ENCODE measurements at regions of chr1 and their contacts with region 1.

Region 1: DNA sequence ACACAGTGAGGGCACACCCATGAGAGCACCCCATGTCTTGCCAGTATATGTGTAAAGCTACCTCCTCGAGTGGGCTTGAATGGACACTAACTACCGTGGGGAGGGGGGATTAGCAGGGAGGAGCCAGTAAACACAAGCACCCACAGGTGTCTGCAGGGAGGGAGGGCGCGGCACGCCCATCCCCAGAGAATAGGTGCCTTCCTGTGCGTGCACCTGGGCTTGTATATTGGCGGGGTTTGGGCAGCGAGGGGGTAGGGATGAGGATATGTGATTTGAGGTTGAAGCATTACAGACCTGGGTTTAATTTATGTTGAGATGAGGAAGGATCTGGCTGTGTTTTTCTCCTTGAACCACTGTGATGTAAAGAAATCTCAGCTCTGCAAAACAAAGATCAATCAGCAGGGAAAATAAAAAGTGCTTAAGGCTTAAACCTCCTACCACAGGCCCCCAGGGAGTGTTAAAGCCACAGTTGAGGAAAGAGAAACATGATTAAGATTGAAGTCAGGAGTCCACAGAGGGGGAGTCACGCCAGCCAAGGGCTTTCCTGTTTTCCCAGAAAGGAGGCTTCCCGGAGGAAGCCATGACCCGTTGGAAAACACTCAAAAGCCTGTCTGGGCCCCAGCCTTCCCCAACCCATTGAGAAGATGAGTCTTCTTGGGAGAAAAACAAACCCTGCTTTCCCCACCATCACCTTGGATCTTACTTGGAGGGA is 80.0 kb downstream of the CAMK2N1 start:
- DNase-seq: peak; percentile 95
- H3K4me3 ChIP-seq: peak overlapping the region; percentile 67
- H3K27ac ChIP-seq: peak overlapping the region; percentile 99
- H3K4me1 ChIP-seq: peaks cover 87% of the 10 kb centered on the region
- CTCF ChIP-seq: no peak

Region 2: GRCh38 chr1:20383631-20384030 is 22.4 kb before region 1 on chr1:
- CTCF ChIA-PET with region 1: interaction called, 5 read pairs
- POLR2A ChIA-PET with region 1: interaction called, 43 read pairs
- intact Hi-C with region 1: loop called (anchors 1 kb)
- DNase-seq: peak; percentile 95
- H3K4me3 ChIP-seq: peak overlapping the region; percentile 42
- H3K27ac ChIP-seq: peak overlapping the region; percentile 90
- H3K4me1 ChIP-seq: peaks cover 94% of the 10 kb centered on the region
- CTCF ChIP-seq: no peak

Region 3: GRCh38 chr1:20390589-20391331 is 15.3 kb before region 1 on chr1:
- CTCF ChIA-PET with region 1: interaction called, 5 read pairs
- POLR2A ChIA-PET with region 1: interaction called, 17 read pairs
- intact Hi-C with region 1: no loop called
- DNase-seq: no peak
- H3K4me3 ChIP-seq: no peak overlapping the region
- H3K27ac ChIP-seq: no peak overlapping the region
- H3K4me1 ChIP-seq: peaks cover 44% of the 10 kb centered on the region
- CTCF ChIP-seq: no peak

Region 4: GRCh38 chr1:20454004-20454403 is 48.0 kb after region 1 on chr1:
- CTCF ChIA-PET with region 1: no interaction called
- POLR2A ChIA-PET with region 1: no interaction called
- intact Hi-C with region 1: no loop called
- DNase-seq: no peak
- H3K4me3 ChIP-seq: no peak overlapping the region
- H3K27ac ChIP-seq: no peak overlapping the region
- H3K4me1 ChIP-seq: no peaks in the 10 kb centered on the region
- CTCF ChIP-seq: no peak